ENCODE measurements at regions of chr4 and their contacts with region 1.

Region 1: GRCh38 chr4:1346781-1347409 is at the start of gene UVSSA:
- DNase-seq: peak; percentile 100
- ATAC-seq: peak; percentile 91
- H3K4me3 Mint-ChIP-seq: peak within 1 kb of the TSS; percentile 98
- H3K27ac Mint-ChIP-seq: peak within 1 kb of the TSS; percentile 96
- H3K4me1 Mint-ChIP-seq: peaks cover 25% of the 10 kb centered on the region
- H3K27me3 Mint-ChIP-seq: no peaks in the 10 kb centered on the region
- total RNA-seq, gene UVSSA: 30.0 to 30.9 TPM

Region 2: GRCh38 chr4:1137063-1137776 is 209.7 kb before region 1 on chr4:
- POLR2A ChIA-PET with region 1: interaction called, 10 read pairs
- DNase-seq: no peak
- ATAC-seq: peak; percentile 70
- H3K4me3 Mint-ChIP-seq: peak overlapping the region; percentile 88
- H3K27ac Mint-ChIP-seq: peak overlapping the region; percentile 85
- H3K4me1 Mint-ChIP-seq: peaks cover 13% of the 10 kb centered on the region
- H3K27me3 Mint-ChIP-seq: peaks cover 27% of the 10 kb centered on the region

Region 3: DNA sequence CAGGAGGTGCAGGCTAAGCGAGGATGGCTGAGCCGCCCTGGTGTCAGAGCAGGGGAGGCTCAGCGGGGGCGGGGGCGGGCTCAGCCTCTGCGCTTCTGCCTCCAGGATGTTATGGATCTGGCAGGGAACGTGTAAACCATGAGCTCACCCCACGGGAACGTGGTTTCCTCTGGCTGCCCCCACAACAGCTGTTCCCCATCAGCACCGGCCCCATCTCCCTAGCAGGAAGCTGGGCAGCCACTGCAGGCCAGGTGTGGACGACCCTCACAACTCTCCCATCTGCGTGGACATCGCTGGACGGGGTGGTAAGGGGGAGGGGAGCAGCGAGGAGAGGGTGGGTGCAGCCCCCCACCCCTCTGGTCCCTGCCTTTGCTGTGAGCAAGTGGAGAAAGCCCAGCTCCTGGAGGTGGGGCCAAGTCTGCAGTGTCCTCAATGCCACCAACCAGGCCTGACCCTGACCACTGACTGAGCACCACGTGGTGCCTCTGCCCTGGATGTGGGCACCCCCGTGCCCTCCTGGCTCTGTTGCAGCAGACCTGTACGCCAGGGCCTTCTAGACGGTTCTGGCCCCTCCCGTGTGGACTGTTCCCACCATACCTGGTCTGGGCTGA is 146.4 kb before region 1 on chr4:
- POLR2A ChIA-PET with region 1: interaction called, 12 read pairs
- DNase-seq: peak; percentile 56
- ATAC-seq: no peak
- H3K4me3 Mint-ChIP-seq: peak overlapping the region; percentile 83
- H3K27ac Mint-ChIP-seq: peak overlapping the region; percentile 100
- H3K4me1 Mint-ChIP-seq: peaks cover 37% of the 10 kb centered on the region
- H3K27me3 Mint-ChIP-seq: no peaks in the 10 kb centered on the region

Region 4: DNA sequence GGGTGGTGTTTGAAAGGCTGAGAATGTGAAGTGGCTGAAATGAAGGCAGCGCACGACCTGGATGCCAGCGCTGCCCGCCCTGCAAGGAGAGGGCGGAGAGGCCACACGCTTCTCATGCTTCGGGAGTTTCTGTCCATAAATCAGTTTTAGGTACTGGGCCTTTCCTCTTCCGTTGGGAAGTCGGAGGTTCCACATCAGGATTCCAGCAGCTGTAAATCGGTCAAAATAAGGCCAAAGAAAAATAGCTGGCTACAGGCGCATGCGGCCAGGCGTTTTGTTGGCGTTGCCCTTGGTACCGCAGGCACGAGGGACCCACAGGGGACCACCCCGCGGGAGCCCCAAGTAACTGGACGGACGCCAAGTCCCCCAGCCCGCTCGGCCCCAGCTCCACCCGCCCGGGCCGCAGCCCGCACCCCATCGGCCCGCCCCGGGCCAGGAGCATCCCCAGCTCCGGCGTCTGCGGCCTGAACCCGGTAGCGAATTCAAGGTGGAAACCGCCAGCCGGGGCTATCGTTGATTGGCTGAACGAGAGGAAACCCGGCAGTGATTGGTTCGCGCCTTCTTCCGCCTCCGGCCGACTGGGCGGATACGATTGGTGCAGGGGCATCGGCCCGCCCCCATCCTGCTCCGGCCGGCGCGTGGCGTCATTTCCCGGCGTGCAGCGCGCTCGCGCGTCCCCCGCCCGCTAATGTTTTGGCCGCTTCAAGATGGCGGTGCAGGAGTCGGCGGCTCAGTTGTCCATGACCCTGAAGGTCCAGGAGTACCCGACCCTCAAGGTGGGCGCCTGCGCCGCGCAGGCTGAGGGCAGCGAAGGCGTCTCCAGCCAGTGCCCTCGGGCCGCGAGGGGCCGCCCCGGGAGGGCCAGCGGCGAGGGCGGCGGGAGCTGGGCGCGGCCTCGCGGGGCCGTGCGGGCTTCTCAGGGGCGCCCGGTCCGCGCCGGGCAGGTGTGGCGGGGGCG is 57.4 kb before region 1 on chr4 and contains the start of gene MAEA:
- POLR2A ChIA-PET with region 1: interaction called, 17 read pairs
- DNase-seq: peak; percentile 97
- ATAC-seq: peak; percentile 93
- H3K4me3 Mint-ChIP-seq: peak within 1 kb of the TSS; percentile 91
- H3K27ac Mint-ChIP-seq: peak within 1 kb of the TSS; percentile 85
- H3K4me1 Mint-ChIP-seq: peaks cover 26% of the 10 kb centered on the region
- H3K27me3 Mint-ChIP-seq: no peaks in the 10 kb centered on the region
- total RNA-seq, gene MAEA: 73.2 to 82.9 TPM

Region 5: GRCh38 chr4:1329408-1330371 is 17.2 kb before region 1 on chr4:
- POLR2A ChIA-PET with region 1: interaction called, 12 read pairs
- DNase-seq: no peak
- ATAC-seq: peak; percentile 24
- H3K4me3 Mint-ChIP-seq: peak overlapping the region; percentile 64
- H3K27ac Mint-ChIP-seq: peak overlapping the region; percentile 28
- H3K4me1 Mint-ChIP-seq: peaks cover 24% of the 10 kb centered on the region
- H3K27me3 Mint-ChIP-seq: no peaks in the 10 kb centered on the region

Measured in activated naive CD8-positive, alpha-beta T cell treated with anti-CD3 and anti-CD28 coated beads, Interleukin-2, amount 10 ng/mL, durations not matched to agents 7 days and 5 days (primary cell).